Esophagus squamous epithelium (tissue), 5 donors: ENCODE measurements at regions of chr12 and their contacts with region 1.

Region 1: DNA sequence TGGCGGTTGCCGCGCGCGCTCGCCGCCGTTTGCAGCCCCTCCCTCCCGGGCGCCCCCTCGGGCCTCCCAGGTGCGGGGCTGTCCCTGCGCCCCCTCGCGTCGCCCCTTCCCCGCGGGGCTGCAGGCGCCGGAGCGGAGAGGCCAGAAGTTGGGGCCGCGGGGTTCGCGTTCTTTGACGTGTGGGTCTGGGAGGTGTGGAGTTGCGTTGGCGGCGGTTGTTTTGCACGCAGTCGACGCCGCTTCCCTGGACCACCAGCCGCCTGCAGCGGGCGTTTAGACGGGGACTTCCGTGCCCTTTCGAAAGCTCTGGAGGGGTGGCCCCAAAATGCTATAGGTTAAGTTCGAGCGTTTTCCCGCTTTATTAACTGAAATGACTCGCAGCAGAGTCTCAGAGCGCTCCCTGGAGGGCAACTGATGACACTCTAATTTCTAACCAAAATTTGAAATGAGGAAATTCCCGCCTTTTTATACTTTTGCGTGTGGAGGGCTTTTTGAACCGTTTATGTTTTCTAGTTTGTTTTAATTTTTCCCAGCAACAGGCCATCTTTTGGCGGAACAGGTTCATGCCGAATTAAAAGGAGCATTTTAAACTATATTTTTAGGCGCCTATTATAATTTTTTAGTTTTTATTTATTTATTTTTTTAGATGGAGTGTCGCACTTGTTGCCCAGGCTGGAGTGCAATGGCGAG is 939 bp downstream of the TMPO start:
- DNase-seq: peak; percentile 15
- H3K4me3 ChIP-seq: peak overlapping the region; percentile 81 to 100 (median 97)
- H3K27ac ChIP-seq: peak overlapping the region; percentile 89 to 98 (median 97)
- H3K4me1 ChIP-seq: peaks cover 17 to 65% (median 18%) of the 10 kb centered on the region in 3 donors
- H3K27me3 ChIP-seq: no peaks in the 10 kb centered on the region
- CTCF ChIP-seq: peak; percentile 35 to 78 (median 72)
- POLR2A ChIP-seq: no peak

Region 2: DNA sequence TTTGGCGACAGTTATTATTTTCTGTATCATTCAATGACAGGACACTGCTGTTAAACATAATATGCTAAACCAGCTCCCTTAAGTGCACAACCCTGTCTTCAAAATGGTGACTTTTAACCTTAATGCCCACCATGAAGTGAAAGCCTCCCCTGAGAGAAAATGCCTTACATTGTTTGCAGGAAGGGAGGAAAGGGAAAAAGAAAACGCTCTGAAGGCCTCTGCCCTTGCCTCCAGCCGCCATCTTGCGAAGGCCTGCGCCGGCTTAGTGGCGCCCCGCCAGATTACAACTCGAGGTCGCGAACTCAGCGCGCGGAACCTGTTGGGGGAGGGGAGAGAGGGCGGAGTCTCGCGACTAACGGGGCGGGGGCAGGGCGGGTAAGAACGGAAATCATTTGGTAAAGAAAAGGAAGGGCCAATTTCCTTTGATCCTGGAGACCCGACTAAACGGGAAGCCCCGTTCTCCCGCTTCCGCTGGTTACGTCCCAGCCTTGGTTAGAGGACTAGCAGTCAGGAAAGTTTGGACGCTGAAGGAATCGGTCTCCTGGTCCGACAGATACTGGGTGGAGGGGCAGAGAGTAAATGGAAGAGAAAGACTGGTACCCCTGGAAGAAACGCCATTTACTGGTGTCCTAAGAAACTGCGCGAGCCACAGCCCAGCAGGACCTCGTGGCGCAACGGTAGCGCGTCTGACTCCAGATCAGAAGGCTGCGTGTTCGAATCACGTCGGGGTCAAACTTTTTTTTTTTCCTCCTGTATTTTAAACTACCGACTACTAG is 12.5 kb before region 1 on chr12:
- intact Hi-C with region 1: loop called (anchors 2 kb)
- DNase-seq: peak; percentile 78
- H3K4me3 ChIP-seq: peak overlapping the region; percentile 43 to 82 (median 69)
- H3K27ac ChIP-seq: peak overlapping the region; percentile 86 to 97 (median 96)
- H3K4me1 ChIP-seq: peaks cover 2 to 31% (median 8%) of the 10 kb centered on the region in 3 donors
- H3K27me3 ChIP-seq: no peaks in the 10 kb centered on the region
- CTCF ChIP-seq: peak in 3 of 6 experiments; percentile 0 to 8 (median 4)
- POLR2A ChIP-seq: peak in 1 of 4 donors; percentile 56

Region 3: GRCh38 chr12:98572010-98572409 is 55.7 kb after region 1 on chr12:
- intact Hi-C with region 1: no loop called
- DNase-seq: no peak
- H3K4me3 ChIP-seq: no peak overlapping the region
- H3K27ac ChIP-seq: no peak overlapping the region
- H3K4me1 ChIP-seq: peaks cover 0 to under 1% (median 0%) of the 10 kb centered on the region in 3 donors
- H3K27me3 ChIP-seq: no peaks in the 10 kb centered on the region
- CTCF ChIP-seq: peak in 1 of 6 experiments; percentile 22
- POLR2A ChIP-seq: no peak